Head of caudate nucleus (tissue), 42 donors: ENCODE measurements at regions of chr1 and their contacts with region 1.

Region 1: DNA sequence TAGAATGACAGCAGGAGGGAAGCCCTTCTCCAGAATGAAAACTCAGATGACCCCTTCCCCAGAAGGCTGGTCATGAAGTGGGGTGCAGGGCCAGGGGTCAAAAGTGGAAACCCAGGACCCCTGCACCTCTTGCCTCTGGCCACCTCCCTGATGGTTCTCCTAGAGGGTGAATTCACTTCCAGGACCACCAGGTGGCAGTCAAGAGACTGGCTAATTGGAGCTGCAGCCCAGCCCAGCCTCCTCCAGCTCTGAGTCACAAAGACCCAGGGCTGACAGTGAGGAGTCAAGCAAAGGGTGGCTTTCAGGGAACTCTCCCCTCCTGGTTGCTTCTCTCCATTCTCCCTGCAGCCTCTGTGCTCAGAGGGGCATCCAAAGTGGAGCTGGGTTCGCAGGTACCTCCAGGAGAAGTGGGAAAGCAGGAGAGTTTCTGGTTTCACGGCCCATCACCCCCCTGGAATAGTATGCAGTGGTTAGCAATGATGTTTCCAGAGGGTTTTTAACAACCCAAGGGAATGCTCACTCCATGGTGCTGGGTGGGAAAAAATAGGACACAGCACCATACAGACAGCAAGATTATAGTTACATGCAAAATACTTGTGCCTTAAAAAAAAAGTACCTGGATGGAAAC is 6.1 kb upstream of the EPHB2 start:
- DNase-seq: peak; percentile 81 to 97 (median 93)

Region 2: GRCh38 chr1:22889213-22889827 is 184.8 kb after region 1 on chr1:
- intact Hi-C with region 1: loop called (anchors 10 kb)
- DNase-seq: peak in 20 of 42 donors; percentile 20 to 67 (median 38)

Region 3: DNA sequence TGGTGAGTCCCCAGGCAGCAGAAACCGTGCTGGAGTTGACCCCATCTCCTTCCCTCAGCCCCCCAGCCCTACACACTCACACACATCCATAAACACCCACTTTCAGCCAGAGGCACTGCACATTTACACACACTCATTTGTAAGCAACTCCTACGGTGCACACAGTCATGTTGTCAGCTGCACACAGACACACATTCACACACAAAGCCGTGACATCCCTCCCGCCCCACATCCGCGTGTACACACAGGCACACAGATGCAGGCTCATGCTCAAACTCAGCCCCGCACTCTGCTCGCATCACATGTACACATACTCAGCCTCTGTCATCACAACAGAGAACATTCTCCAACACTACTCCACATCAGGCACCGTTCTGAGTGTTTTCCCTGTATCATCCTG is 220.6 kb after region 1 on chr1:
- intact Hi-C with region 1: loop called (anchors 5 kb)
- DNase-seq: peak in 2 of 42 donors; percentile 8 to 34